PC-9 (cell line): ENCODE measurements at regions of chr1 and their contacts with region 1.

Region 1: DNA sequence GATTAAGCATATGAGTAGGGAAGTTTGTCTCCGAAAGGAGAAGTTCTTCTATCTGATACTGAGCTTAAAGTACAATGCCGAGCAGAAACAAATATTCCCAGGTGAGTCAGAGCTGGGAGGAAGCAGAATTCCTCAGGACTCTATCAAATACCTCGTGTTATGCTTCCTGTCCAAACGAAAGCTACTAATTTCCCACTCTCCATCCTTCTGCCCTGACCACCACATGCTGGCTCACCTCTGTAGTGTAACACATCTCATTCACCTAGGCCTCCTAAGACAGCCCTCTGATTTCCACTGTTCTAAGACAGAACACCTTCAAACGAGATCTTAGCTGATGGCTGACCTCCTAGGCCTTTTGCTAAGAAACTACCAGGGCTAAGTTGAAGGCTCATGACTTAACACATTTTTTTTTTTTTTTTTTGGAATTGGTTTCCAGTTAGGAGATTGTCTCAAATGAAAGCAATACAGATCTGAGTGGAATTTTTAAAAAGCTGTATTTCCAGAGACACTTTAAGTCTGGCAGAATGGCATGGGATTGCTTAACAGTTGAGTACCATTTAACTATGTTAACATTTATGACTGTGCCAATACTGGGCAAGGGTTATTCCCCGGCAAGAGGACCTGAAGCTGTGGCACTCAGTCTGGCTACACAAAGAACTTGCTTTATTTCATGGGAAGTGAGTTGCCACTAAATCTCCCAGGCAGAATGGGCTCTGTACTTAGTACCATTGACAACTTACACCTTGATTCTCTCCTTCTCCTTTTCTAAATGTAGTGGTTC is 583.4 kb downstream of the DPYD start:
- DNase-seq: no peak
- H3K4me3 ChIP-seq: no peak overlapping the region
- H3K27ac ChIP-seq: no peak overlapping the region
- H3K4me1 ChIP-seq: no peaks in the 10 kb centered on the region
- H3K27me3 ChIP-seq: no peaks in the 10 kb centered on the region
- CTCF ChIP-seq: no peak

Region 2: GRCh38 chr1:97368296-97368695 is 30.9 kb after region 1 on chr1:
- CTCF ChIA-PET with region 1: no interaction called
- POLR2A ChIA-PET with region 1: no interaction called
- intact Hi-C with region 1: no loop called
- DNase-seq: no peak
- H3K4me3 ChIP-seq: no peak overlapping the region
- H3K27ac ChIP-seq: no peak overlapping the region
- H3K4me1 ChIP-seq: no peaks in the 10 kb centered on the region
- H3K27me3 ChIP-seq: no peaks in the 10 kb centered on the region
- CTCF ChIP-seq: no peak

Region 3: GRCh38 chr1:97767381-97767780 is 429.9 kb after region 1 on chr1:
- CTCF ChIA-PET with region 1: no interaction called
- POLR2A ChIA-PET with region 1: no interaction called
- intact Hi-C with region 1: no loop called
- DNase-seq: no peak
- H3K4me3 ChIP-seq: no peak overlapping the region
- H3K27ac ChIP-seq: no peak overlapping the region
- H3K4me1 ChIP-seq: no peaks in the 10 kb centered on the region
- H3K27me3 ChIP-seq: no peaks in the 10 kb centered on the region
- CTCF ChIP-seq: no peak

Region 4: DNA sequence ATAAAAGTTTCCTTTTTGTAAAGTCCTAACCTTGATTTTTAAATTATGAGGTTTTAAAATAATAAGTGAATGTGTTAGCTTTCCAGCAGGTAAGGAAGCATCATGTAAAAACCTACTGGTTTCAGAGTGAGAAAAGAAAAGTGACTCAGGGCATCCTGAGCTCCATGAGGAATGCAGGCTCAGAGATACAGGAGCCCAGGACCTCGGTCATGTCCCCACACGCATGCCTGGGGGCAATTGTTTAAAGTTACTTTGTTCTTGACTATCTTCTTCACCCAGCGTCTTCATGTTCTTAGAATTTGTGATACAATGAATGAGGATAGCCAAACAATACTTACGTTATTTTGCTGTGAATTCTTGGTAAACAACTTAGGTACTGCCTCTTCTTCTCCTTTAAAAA is 1784.6 kb after region 1 on chr1:
- CTCF ChIA-PET with region 1: interaction called, 11 read pairs
- POLR2A ChIA-PET with region 1: no interaction called
- intact Hi-C with region 1: no loop called
- DNase-seq: no peak
- H3K4me3 ChIP-seq: no peak overlapping the region
- H3K27ac ChIP-seq: no peak overlapping the region
- H3K4me1 ChIP-seq: no peaks in the 10 kb centered on the region
- H3K27me3 ChIP-seq: no peaks in the 10 kb centered on the region
- CTCF ChIP-seq: no peak